ENCODE measurements at regions of chr9 and their contacts with region 1.

Region 1: GRCh38 chr9:35829084-35829763 is at the start of gene TMEM8B:
- DNase-seq: peak; percentile 96
- H3K4me3 Mint-ChIP-seq: peak within 1 kb of the TSS; percentile 91
- H3K27ac Mint-ChIP-seq: peak within 1 kb of the TSS; percentile 60
- H3K4me1 Mint-ChIP-seq: peaks cover 23% of the 10 kb centered on the region
- H3K27me3 Mint-ChIP-seq: no peaks in the 10 kb centered on the region
- total RNA-seq, gene TMEM8B: 5.9 to 6.0 TPM

Region 2: GRCh38 chr9:35653611-35654010 is 175.6 kb before region 1 on chr9:
- CTCF ChIA-PET with region 1: no interaction called
- POLR2A ChIA-PET with region 1: no interaction called
- intact Hi-C with region 1: no loop called
- DNase-seq: no peak
- H3K4me3 Mint-ChIP-seq: no peak overlapping the region
- H3K27ac Mint-ChIP-seq: no peak overlapping the region
- H3K4me1 Mint-ChIP-seq: peaks cover 51% of the 10 kb centered on the region
- H3K27me3 Mint-ChIP-seq: peaks cover 2% of the 10 kb centered on the region

Region 3: GRCh38 chr9:35790385-35791296 is 38.6 kb before region 1 on chr9:
- CTCF ChIA-PET with region 1: interaction called, 28 read pairs
- POLR2A ChIA-PET with region 1: no interaction called
- intact Hi-C with region 1: loop called (anchors 1 kb)
- DNase-seq: peak; percentile 60
- H3K4me3 Mint-ChIP-seq: no peak overlapping the region
- H3K27ac Mint-ChIP-seq: no peak overlapping the region
- H3K4me1 Mint-ChIP-seq: peaks cover 5% of the 10 kb centered on the region
- H3K27me3 Mint-ChIP-seq: no peaks in the 10 kb centered on the region

Region 4: GRCh38 chr9:35798658-35799374 is 30.4 kb before region 1 on chr9:
- CTCF ChIA-PET with region 1: interaction called, 14 read pairs
- POLR2A ChIA-PET with region 1: no interaction called
- intact Hi-C with region 1: no loop called
- DNase-seq: peak; percentile 69
- H3K4me3 Mint-ChIP-seq: no peak overlapping the region
- H3K27ac Mint-ChIP-seq: peak overlapping the region; percentile 64
- H3K4me1 Mint-ChIP-seq: peaks cover 26% of the 10 kb centered on the region
- H3K27me3 Mint-ChIP-seq: no peaks in the 10 kb centered on the region

Region 5: GRCh38 chr9:35844716-35845270 is 15.6 kb after region 1 on chr9:
- CTCF ChIA-PET with region 1: interaction called, 4 read pairs
- POLR2A ChIA-PET with region 1: interaction called, 3 read pairs
- intact Hi-C with region 1: loop called (anchors 2 kb)
- DNase-seq: no peak
- H3K4me3 Mint-ChIP-seq: no peak overlapping the region
- H3K27ac Mint-ChIP-seq: no peak overlapping the region
- H3K4me1 Mint-ChIP-seq: peaks cover 36% of the 10 kb centered on the region
- H3K27me3 Mint-ChIP-seq: no peaks in the 10 kb centered on the region

Region 6: GRCh38 chr9:35935755-35936509 is 106.7 kb after region 1 on chr9:
- CTCF ChIA-PET with region 1: no interaction called
- POLR2A ChIA-PET with region 1: no interaction called
- intact Hi-C with region 1: no loop called
- DNase-seq: no peak
- H3K4me3 Mint-ChIP-seq: no peak overlapping the region
- H3K27ac Mint-ChIP-seq: no peak overlapping the region
- H3K4me1 Mint-ChIP-seq: peaks cover 46% of the 10 kb centered on the region
- H3K27me3 Mint-ChIP-seq: no peaks in the 10 kb centered on the region

Region 7: DNA sequence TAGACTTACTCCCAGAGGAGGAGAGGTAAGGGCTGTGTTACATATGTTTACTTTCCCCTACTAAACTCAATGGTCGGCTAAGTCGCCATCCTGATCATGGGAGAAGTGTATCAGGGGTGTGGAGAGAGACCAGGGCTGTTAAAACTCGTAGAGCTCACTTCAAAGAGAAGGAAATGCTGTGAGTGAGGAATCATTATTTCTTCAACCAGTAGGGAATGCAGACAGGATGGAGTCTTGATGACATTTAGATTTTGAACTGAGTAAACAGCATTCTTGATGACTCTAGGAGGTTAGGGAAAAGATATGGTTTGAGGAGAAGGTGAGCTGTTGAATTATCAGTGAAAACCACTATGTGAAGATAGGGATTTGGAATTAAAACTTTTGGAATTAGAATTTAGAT is 224.7 kb after region 1 on chr9:
- CTCF ChIA-PET with region 1: no interaction called
- POLR2A ChIA-PET with region 1: no interaction called
- intact Hi-C with region 1: no loop called
- DNase-seq: no peak
- H3K4me3 Mint-ChIP-seq: no peak overlapping the region
- H3K27ac Mint-ChIP-seq: no peak overlapping the region
- H3K4me1 Mint-ChIP-seq: no peaks in the 10 kb centered on the region
- H3K27me3 Mint-ChIP-seq: no peaks in the 10 kb centered on the region

Region 8: GRCh38 chr9:36064448-36065037 is 235.3 kb after region 1 on chr9:
- CTCF ChIA-PET with region 1: no interaction called
- POLR2A ChIA-PET with region 1: no interaction called
- intact Hi-C with region 1: no loop called
- DNase-seq: no peak
- H3K4me3 Mint-ChIP-seq: no peak overlapping the region
- H3K27ac Mint-ChIP-seq: no peak overlapping the region
- H3K4me1 Mint-ChIP-seq: peaks cover 4% of the 10 kb centered on the region
- H3K27me3 Mint-ChIP-seq: no peaks in the 10 kb centered on the region